ENCODE measurements at regions of chr20 and their contacts with region 1.

Region 1: DNA sequence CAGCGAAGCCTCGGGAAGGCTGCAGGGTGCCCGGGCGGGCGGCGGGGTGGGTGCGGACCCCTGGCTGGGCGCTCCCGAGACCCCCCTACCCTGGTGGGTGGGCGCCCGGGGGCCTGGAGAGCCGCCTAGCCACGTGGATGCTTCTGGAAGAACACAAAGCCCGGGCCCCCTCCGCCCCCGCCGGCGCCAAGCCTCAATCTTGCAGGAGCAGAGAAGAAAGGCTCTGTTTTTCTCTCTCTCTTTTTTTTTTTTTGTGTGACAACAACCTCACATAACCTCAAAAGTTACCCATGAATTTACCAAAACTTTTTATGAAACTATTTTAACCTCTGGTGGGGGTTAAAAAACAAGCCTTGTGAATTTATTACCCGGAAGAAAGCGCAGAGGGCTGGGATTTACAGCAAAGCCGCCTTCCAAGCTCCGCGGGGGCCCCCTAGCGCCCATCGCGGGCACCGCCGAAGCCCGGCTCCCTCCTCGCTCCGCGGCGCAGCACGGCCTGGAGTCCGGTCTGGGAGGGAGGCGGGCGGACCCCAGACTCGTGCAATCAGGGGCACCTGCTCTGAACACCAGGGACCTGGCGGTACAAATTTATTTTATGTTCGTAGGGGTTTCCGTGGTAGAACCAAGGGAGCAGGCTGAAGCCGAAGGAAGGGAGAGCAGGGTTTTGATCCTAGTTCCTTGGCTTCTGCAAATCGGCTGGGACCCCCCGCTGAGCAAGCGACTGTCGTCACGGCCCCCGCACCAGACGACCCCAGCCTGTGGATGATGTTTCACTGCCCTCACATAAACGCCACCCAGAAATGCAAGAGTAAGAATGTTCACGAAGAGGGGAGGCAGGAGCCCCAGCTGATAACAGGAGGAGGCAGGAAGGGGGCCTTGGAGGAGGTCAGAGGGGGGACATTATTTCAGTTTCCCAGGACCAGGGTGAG is 58.9 kb downstream of the ZNF831 start:
- DNase-seq: peak; percentile 71
- H3K4me3 Mint-ChIP-seq: peak overlapping the region; percentile 77
- H3K27ac Mint-ChIP-seq: no peak overlapping the region
- H3K4me1 Mint-ChIP-seq: peaks cover 13% of the 10 kb centered on the region
- H3K27me3 Mint-ChIP-seq: peaks cover 5% of the 10 kb centered on the region

Region 2: GRCh38 chr20:58870239-58871014 is 352.1 kb before region 1 on chr20:
- intact Hi-C with region 1: loop called (anchors 5 kb)
- DNase-seq: no peak
- H3K4me3 Mint-ChIP-seq: no peak overlapping the region
- H3K27ac Mint-ChIP-seq: no peak overlapping the region
- H3K4me1 Mint-ChIP-seq: peaks cover 7% of the 10 kb centered on the region
- H3K27me3 Mint-ChIP-seq: peaks cover 22% of the 10 kb centered on the region

Region 3: GRCh38 chr20:59403261-59403961 is 180.9 kb after region 1 on chr20:
- intact Hi-C with region 1: loop called (anchors 10 kb)
- DNase-seq: peak; percentile 55
- H3K4me3 Mint-ChIP-seq: no peak overlapping the region
- H3K27ac Mint-ChIP-seq: no peak overlapping the region
- H3K4me1 Mint-ChIP-seq: no peaks in the 10 kb centered on the region
- H3K27me3 Mint-ChIP-seq: peaks cover 14% of the 10 kb centered on the region

Region 4: GRCh38 chr20:59525500-59526241 is 303.2 kb after region 1 on chr20:
- intact Hi-C with region 1: no loop called
- DNase-seq: no peak
- H3K4me3 Mint-ChIP-seq: no peak overlapping the region
- H3K27ac Mint-ChIP-seq: no peak overlapping the region
- H3K4me1 Mint-ChIP-seq: peaks cover 2% of the 10 kb centered on the region
- H3K27me3 Mint-ChIP-seq: peaks cover 34% of the 10 kb centered on the region

Measured in activated T-helper 2 cell treated with anti-CD3 and anti-CD28 coated beads, Interferon-gamma antibody, Interleukin-2, Interleukin-4, amounts not matched to agents 10 μg/mL and 5 μg/mL and 100 μg/mL, durations not matched to agents 14 hours and 24 hours and 36 hours (primary cell).